ENCODE measurements at regions of chr16 and their contacts with region 1.

Region 1: GRCh38 chr16:10428433-10429168 is 42.7 kb downstream of the ATF7IP2 start:
- DNase-seq: no peak
- ATAC-seq: no peak
- H3K4me3 Mint-ChIP-seq: no peak overlapping the region
- H3K27ac Mint-ChIP-seq: no peak overlapping the region
- H3K4me1 Mint-ChIP-seq: no peaks in the 10 kb centered on the region
- H3K27me3 Mint-ChIP-seq: no peaks in the 10 kb centered on the region
- CTCF ChIP-seq: no peak

Region 2: GRCh38 chr16:10256784-10257641 is 171.6 kb before region 1 on chr16:
- CTCF ChIA-PET with region 1: no interaction called
- POLR2A ChIA-PET with region 1: no interaction called
- intact Hi-C with region 1: loop called (anchors 10 kb)
- DNase-seq: peak; percentile 56
- ATAC-seq: peak; percentile 83
- H3K4me3 Mint-ChIP-seq: peak overlapping the region; percentile 71
- H3K27ac Mint-ChIP-seq: peak overlapping the region; percentile 47
- H3K4me1 Mint-ChIP-seq: peaks cover 42% of the 10 kb centered on the region
- H3K27me3 Mint-ChIP-seq: no peaks in the 10 kb centered on the region
- CTCF ChIP-seq: no peak

Measured in activated B cell treated with CpG ODN at 0.5 μM for 24 hours (primary cell).